ENCODE measurements at regions of chr17 and their contacts with region 1.

Region 1: GRCh38 chr17:72587773-72588511 is 467.1 kb downstream of the SOX9 start:
- DNase-seq: no peak
- H3K4me3 ChIP-seq: peak overlapping the region; percentile 21 to 80 (median 71)
- H3K27ac ChIP-seq: peak overlapping the region; percentile 71 to 87 (median 85)
- H3K4me1 ChIP-seq: peaks cover 10 to 66% (median 19%) of the 10 kb centered on the region in 3 donors
- H3K27me3 ChIP-seq: peaks cover 0 to 23% (median 0%) of the 10 kb centered on the region in 4 donors
- CTCF ChIP-seq: peak in 3 of 6 experiments; percentile 13 to 34 (median 15)
- POLR2A ChIP-seq: no peak

Region 2: DNA sequence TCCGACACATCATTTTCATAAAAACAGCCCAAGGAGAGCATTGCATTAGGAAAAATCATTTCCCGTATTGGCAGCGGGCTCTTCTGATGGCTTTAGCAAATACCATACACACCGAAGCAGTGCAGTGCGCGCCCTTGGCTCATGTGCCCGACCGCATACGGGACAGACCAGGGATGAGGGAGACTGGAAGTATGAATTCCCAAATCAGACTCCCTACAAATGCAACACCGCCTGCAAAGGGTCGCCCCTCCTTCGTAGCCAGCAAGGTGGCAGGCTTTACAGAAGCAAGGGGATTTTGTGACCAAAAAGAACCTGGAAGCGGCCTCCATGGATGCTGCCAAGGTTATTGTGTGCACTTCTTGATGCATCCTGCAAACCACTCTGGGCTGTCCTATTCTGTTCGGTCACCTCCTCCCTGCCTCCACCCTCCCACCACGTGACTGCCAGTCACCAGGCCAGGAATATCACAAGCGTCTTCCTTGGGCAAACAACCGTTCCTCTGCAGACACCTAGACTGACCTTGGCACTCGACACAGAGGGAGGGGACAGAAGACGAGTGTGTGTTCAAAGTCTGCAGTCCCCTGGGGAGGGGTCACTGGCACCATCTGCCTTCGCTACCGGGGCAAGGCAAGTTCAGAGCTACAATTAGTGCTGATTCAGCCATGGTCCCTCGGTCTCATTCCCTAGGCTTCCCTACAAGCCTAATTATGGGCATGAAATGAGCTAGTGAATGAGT is 44.2 kb after region 1 on chr17:
- intact Hi-C with region 1: no loop called
- DNase-seq: no peak
- H3K4me3 ChIP-seq: no peak overlapping the region
- H3K27ac ChIP-seq: peak overlapping the region; percentile 26 to 84 (median 44)
- H3K4me1 ChIP-seq: peaks cover 0 to 43% (median 14%) of the 10 kb centered on the region in 3 donors
- H3K27me3 ChIP-seq: no peaks in the 10 kb centered on the region
- CTCF ChIP-seq: no peak
- POLR2A ChIP-seq: no peak

Region 3: GRCh38 chr17:72702136-72702735 is 114.3 kb after region 1 on chr17:
- intact Hi-C with region 1: loop called (anchors 10 kb)
- DNase-seq: no peak
- H3K4me3 ChIP-seq: no peak overlapping the region
- H3K27ac ChIP-seq: no peak overlapping the region
- H3K4me1 ChIP-seq: peaks cover 0 to 51% (median 14%) of the 10 kb centered on the region in 3 donors
- H3K27me3 ChIP-seq: no peaks in the 10 kb centered on the region
- CTCF ChIP-seq: no peak
- POLR2A ChIP-seq: no peak

Region 4: GRCh38 chr17:72850410-72851118 is 262.6 kb after region 1 on chr17:
- intact Hi-C with region 1: no loop called
- DNase-seq: no peak
- H3K4me3 ChIP-seq: no peak overlapping the region
- H3K27ac ChIP-seq: no peak overlapping the region
- H3K4me1 ChIP-seq: no peaks in the 10 kb centered on the region
- H3K27me3 ChIP-seq: no peaks in the 10 kb centered on the region
- CTCF ChIP-seq: no peak
- POLR2A ChIP-seq: no peak

Region 5: DNA sequence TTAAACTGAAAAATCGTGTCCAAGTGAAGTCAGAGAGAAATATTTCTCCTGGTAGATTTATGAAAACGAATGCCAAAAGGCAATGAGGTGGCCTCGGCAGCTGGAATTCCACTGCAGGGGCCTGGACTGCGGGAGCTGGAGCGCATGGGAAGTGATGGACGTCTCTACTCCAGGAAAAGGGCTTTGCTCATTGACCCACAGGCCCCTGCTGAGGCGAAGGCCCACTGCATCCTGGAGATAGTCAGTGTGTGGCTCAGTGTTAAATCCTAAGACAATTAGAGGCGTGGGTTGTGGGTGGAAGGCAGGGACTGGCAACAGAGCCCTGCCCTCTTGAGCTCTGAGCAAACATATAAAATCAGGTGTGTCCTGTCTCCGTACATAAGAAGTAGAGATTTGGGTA is 313.1 kb after region 1 on chr17:
- intact Hi-C with region 1: no loop called
- DNase-seq: no peak
- H3K4me3 ChIP-seq: no peak overlapping the region
- H3K27ac ChIP-seq: no peak overlapping the region
- H3K4me1 ChIP-seq: peaks cover 0 to 15% (median 0%) of the 10 kb centered on the region in 3 donors
- H3K27me3 ChIP-seq: no peaks in the 10 kb centered on the region
- CTCF ChIP-seq: no peak
- POLR2A ChIP-seq: no peak

Measured in esophagus squamous epithelium (tissue), 5 donors.